ENCODE measurements at regions of chrX and their contacts with region 1.

Region 1: DNA sequence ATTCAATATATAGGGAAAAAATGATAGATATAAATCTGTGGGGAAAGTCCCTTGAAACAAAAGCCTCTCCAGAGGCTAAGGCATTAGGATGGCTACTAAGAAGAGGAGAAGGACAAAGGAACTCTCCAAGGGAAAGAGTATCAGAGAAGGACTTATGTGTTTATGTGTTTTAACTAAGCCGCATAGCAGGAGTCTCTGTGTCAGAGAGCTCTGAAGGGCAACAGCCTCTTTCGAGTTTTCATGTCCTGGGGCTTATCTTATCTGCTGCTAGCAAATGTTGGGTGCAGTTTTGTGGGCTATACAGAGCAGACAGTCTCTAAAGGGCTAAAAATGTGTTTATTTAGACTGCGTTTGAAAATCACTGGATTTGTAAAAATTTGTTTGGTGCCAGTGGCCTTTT is 1145.6 kb upstream of the DIAPH2 start:
- DNase-seq: no peak
- H3K4me3 ChIP-seq: no peak overlapping the region
- H3K27ac ChIP-seq: no peak overlapping the region
- H3K4me1 ChIP-seq: no peaks in the 10 kb centered on the region
- H3K27me3 ChIP-seq: no peaks in the 10 kb centered on the region
- CTCF ChIP-seq: no peak
- EP300 ChIP-seq: no peak
- POLR2A ChIP-seq: no peak

Region 2: GRCh38 chrX:95076449-95076848 is 462.6 kb before region 1 on chrX:
- in situ Hi-C with region 1: no loop called
- intact Hi-C with region 1: loop called (anchors 5 kb)
- DNase-seq: no peak
- H3K4me3 ChIP-seq: no peak overlapping the region
- H3K27ac ChIP-seq: no peak overlapping the region
- H3K4me1 ChIP-seq: no peaks in the 10 kb centered on the region
- H3K27me3 ChIP-seq: no peaks in the 10 kb centered on the region
- CTCF ChIP-seq: no peak
- EP300 ChIP-seq: no peak
- POLR2A ChIP-seq: no peak

Region 3: DNA sequence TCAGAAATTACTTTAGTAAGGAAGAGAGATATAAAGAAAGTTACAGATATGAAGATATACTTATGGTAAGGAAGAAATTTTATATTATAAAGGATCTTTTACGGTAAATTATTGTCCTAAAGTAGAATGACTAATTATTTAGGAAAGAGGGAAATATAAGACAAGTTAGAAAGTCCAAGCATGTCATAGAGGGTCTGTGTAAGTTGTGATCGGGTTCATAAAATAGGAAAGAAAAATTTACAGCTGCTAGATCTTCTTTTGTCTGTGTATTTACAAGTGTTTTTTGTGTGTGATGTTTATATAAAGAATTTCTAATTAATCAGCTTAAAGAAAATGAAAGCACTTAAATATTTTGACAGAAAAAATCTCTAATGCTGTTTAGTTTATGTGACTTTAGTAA is 90.7 kb after region 1 on chrX:
- in situ Hi-C with region 1: no loop called
- intact Hi-C with region 1: no loop called
- DNase-seq: no peak
- H3K4me3 ChIP-seq: no peak overlapping the region
- H3K27ac ChIP-seq: no peak overlapping the region
- H3K4me1 ChIP-seq: no peaks in the 10 kb centered on the region
- H3K27me3 ChIP-seq: no peaks in the 10 kb centered on the region
- CTCF ChIP-seq: no peak
- EP300 ChIP-seq: no peak
- POLR2A ChIP-seq: no peak

Measured in transverse colon (tissue), 4 donors.